ENCODE measurements at regions of chr21 and their contacts with region 1.

Region 1: GRCh38 chr21:28227881-28228635 is 764.6 kb downstream of the LTN1 start:
- DNase-seq: no peak
- H3K4me3 ChIP-seq: no peak overlapping the region
- H3K27ac ChIP-seq: no peak overlapping the region
- H3K4me1 ChIP-seq: no peaks in the 10 kb centered on the region
- H3K27me3 ChIP-seq: no peaks in the 10 kb centered on the region
- CTCF ChIP-seq: no peak
- POLR2A ChIP-seq: no peak

Region 2: DNA sequence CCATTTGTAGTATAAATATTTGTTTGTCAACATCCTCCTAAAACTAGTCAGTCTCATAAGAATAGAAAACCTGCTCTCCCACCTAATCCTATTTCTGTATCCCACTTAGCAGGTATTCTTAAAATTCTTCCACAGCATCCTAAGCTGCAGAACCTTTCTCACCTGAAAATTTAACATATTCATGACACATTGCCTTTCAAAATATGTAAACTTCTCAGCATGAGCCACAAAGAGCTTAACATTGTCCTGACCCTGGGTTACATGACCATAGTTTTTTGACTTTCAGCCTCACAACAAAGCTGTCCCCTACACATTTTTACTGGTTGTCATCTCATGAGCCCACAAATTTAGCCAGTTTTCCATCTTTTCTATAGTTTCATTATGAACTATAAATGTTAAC is 52.6 kb after region 1 on chr21:
- intact Hi-C with region 1: loop called (anchors 2 kb)
- DNase-seq: no peak
- H3K4me3 ChIP-seq: no peak overlapping the region
- H3K27ac ChIP-seq: no peak overlapping the region
- H3K4me1 ChIP-seq: no peaks in the 10 kb centered on the region
- H3K27me3 ChIP-seq: no peaks in the 10 kb centered on the region
- CTCF ChIP-seq: no peak
- POLR2A ChIP-seq: no peak

Measured in breast epithelium (tissue), 4 donors.